Heart left ventricle (tissue), 16 donors: ENCODE measurements at regions of chr11 and their contacts with region 1.

Region 1: GRCh38 chr11:22304337-22304961 is 33.7 kb upstream of the SLC17A6 start:
- DNase-seq: no peak
- ATAC-seq: no peak
- H3K4me3 ChIP-seq: no peak overlapping the region
- H3K27ac ChIP-seq: no peak overlapping the region
- H3K4me1 ChIP-seq: no peaks in the 10 kb centered on the region
- H3K27me3 ChIP-seq: peaks cover 0 to 11% (median 0%) of the 10 kb centered on the region in 9 donors
- CTCF ChIP-seq: peak; percentile 56 to 81 (median 68)
- POLR2A ChIP-seq: no peak

Region 2: GRCh38 chr11:20658135-20658534 is 1646.3 kb before region 1 on chr11:
- intact Hi-C with region 1: loop called in 1 of 10 experiments (anchors 10 kb)
- DNase-seq: no peak
- ATAC-seq: no peak
- H3K4me3 ChIP-seq: no peak overlapping the region
- H3K27ac ChIP-seq: no peak overlapping the region
- H3K4me1 ChIP-seq: no peaks in the 10 kb centered on the region
- H3K27me3 ChIP-seq: peaks cover 0 to 21% (median 0%) of the 10 kb centered on the region in 9 donors
- CTCF ChIP-seq: no peak
- POLR2A ChIP-seq: no peak

Region 3: DNA sequence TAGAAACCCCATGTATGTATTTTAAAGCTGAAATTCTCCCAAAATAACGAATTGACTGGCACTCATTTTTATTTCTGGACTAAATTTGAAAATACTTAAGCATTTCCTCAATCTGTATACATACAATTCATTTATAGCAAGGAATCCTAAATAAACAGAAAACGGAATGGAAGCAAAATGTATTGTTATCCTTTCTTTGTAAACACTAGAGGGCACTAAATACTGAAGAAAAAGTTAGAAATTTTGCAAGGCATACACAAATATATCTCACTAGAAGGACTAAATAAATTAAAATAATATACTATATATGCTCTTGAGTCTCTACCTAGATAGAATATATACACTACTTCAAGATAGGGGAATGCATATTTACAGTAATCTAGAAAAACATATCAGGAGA is 134.6 kb before region 1 on chr11:
- intact Hi-C with region 1: loop called (anchors 5 to 10 kb)
- DNase-seq: no peak
- ATAC-seq: no peak
- H3K4me3 ChIP-seq: no peak overlapping the region
- H3K27ac ChIP-seq: no peak overlapping the region
- H3K4me1 ChIP-seq: no peaks in the 10 kb centered on the region
- H3K27me3 ChIP-seq: no peaks in the 10 kb centered on the region
- CTCF ChIP-seq: peak; percentile 9 to 58 (median 36)
- POLR2A ChIP-seq: no peak